Activated CD4-positive, alpha-beta T cell treated with anti-CD3 and anti-CD28 coated beads for 36 hours (primary cell): ENCODE measurements at regions of chr11 and their contacts with region 1.

Region 1: DNA sequence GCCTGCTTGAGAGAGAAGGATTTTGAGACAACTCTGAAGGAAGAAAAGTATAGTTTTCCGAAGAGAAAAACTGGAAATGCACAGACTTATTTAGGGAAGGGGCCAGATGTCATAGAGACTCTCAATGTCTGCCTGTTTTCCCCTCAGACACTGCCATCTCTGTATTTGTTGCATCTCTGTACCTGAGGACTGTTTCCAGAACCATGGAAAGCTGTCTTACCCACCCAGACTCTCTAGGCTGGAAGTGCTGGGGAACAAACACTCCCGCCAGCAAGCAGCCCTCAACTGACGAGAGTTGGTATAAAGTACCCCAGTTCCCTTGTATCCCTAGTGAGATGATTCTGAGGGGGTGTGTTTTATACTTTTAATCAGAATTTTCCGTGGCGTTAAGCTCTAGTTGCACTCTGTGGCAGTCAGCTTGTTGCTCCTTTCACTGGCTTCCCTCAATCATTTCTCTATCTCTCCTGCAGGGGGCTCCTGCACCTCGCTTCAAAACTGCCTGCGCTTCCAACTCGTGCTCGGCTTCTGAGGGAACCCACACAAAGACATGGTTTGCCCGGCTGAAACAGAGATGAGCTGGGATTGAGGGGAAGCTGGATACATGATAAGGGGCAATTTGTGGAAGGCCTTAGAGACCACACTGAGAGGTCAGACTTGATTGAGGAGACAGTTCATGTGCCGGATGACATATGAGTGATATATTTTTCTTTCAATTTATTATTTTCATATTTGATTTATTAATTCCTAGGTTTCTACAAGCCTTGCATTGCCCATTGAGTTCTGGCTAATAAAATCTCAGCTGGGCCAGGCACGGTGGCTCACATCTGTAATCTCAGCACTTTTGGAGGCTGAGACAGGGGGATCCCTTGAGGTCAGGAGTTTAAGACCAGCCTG is 36.9 kb upstream of the CLPB start:
- DNase-seq: peak; percentile 75
- ATAC-seq: peak; percentile 94
- H3K4me3 Mint-ChIP-seq: peak overlapping the region; percentile 7
- H3K27ac Mint-ChIP-seq: no peak overlapping the region
- H3K4me1 Mint-ChIP-seq: peaks cover 3% of the 10 kb centered on the region
- H3K27me3 Mint-ChIP-seq: peaks cover 19% of the 10 kb centered on the region

Region 2: GRCh38 chr11:72209101-72209500 is 262.2 kb before region 1 on chr11:
- CTCF ChIA-PET with region 1: no interaction called
- POLR2A ChIA-PET with region 1: no interaction called
- intact Hi-C with region 1: no loop called
- DNase-seq: no peak
- ATAC-seq: no peak
- H3K4me3 Mint-ChIP-seq: no peak overlapping the region
- H3K27ac Mint-ChIP-seq: no peak overlapping the region
- H3K4me1 Mint-ChIP-seq: no peaks in the 10 kb centered on the region
- H3K27me3 Mint-ChIP-seq: peaks cover 13% of the 10 kb centered on the region

Region 3: DNA sequence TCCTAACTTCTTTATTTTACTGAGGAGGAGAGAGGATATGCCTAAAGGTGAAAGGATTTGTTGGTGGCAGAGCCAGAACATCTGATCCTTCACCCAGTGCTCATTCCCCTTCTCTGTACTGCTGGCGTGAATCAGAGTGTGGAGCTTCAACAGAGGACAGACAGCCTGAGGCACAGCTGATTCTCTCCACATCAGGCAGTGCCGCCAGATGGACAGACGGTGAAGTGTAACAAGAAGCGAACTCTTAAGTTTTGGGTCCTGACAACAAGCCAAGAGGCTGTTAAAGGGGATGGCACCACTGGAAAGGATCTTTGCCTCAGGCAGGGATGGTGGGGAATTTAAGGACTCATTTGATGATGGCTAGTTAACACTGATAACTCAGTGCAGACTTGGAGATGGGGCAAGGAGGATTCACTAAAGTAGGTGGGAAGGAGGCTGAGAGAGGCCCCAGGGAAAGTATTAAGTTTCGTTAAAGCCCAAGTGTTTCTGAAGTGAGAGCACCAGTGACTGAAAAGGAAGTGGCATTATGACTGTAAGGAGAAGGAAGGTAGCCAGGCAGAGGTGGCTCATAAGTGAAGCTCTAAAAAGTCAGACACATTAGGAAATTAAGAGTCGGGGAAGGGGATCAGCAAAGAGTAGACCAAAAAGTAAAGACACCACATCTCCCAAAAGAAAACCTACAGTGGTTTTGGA is 118.2 kb before region 1 on chr11:
- CTCF ChIA-PET with region 1: no interaction called
- POLR2A ChIA-PET with region 1: no interaction called
- intact Hi-C with region 1: no loop called
- DNase-seq: peak; percentile 47
- ATAC-seq: peak; percentile 96
- H3K4me3 Mint-ChIP-seq: no peak overlapping the region
- H3K27ac Mint-ChIP-seq: no peak overlapping the region
- H3K4me1 Mint-ChIP-seq: no peaks in the 10 kb centered on the region
- H3K27me3 Mint-ChIP-seq: no peaks in the 10 kb centered on the region

Region 4: GRCh38 chr11:72413914-72414628 is 57.2 kb before region 1 on chr11:
- CTCF ChIA-PET with region 1: no interaction called
- POLR2A ChIA-PET with region 1: no interaction called
- intact Hi-C with region 1: no loop called
- DNase-seq: peak; percentile 92
- ATAC-seq: peak; percentile 85
- H3K4me3 Mint-ChIP-seq: no peak overlapping the region
- H3K27ac Mint-ChIP-seq: peak overlapping the region; percentile 57
- H3K4me1 Mint-ChIP-seq: peaks cover 29% of the 10 kb centered on the region
- H3K27me3 Mint-ChIP-seq: no peaks in the 10 kb centered on the region

Region 5: DNA sequence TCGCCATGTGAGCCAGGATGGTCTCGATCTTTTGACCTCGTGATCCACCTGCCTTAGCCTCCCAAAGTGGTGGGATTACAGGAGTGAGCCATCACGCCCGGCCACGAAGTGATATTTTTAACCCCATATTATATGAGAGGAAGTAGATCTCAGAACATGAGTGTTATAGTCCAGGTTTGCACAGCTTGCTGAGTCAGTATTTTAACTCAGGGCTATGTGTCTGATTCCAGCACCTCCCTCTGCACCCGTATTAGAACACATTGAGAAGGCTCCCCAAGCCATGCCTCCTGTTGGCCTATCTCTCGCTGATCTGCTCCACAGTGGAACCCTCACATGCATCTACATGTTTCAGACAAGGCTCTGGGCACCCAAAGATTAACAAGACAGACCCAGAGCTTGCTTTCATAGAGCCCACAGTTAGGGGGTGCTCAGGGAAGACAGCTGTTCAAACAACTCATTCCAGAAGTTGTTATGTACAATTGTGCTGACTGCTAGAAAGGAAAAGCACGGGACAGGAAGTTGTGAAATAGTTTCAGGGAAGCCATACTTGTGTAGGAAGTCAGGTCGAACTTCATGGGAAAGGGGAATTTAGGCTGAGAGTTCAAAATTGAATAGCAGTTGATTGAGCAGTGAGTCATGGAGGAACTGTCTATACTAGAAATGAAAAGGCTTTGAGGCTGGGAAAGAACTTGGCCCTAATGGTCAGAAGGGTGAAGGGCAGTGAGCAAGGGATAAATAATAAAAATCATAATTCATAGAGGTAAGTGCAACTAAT is 12.3 kb after region 1 on chr11:
- CTCF ChIA-PET with region 1: interaction called, 13 read pairs
- POLR2A ChIA-PET with region 1: no interaction called
- intact Hi-C with region 1: no loop called
- DNase-seq: no peak
- ATAC-seq: peak; percentile 42
- H3K4me3 Mint-ChIP-seq: no peak overlapping the region
- H3K27ac Mint-ChIP-seq: no peak overlapping the region
- H3K4me1 Mint-ChIP-seq: peaks cover 5% of the 10 kb centered on the region
- H3K27me3 Mint-ChIP-seq: peaks cover 2% of the 10 kb centered on the region

Region 6: DNA sequence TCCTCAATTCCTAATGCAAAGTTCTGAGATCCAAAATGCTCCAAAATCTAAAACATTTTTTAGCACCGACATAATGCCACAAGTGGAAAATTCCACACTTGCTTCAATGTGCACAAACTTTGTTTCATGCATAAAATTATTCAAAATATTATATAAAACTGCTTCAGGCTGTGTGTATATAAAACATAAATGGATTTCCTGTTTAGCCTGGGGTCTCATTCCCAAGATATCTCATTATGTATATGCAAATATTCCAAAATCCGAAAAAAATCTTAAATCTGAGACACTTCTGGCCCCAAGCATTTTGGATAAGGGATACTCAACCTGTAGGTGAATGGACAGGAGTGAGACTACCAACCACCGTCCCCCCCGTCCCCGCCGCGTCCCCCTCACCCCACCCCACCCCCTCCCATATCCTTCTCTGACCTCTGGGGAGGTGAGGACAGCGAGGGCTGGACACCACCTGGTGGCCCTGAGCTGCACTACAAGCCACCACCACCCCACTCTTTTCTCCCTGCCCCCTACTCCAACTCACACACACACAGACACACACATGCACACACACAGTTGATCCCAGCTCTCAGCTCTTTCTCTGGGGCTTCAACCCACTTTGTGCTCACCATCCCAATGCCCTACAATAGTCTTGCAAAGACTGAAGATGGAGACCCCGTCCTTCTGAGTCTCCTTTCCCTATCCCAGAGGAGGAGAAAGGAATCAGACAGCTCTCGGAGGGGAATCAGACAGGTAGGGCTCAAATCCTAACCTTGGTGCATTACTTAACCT is 102.0 kb after region 1 on chr11:
- CTCF ChIA-PET with region 1: interaction called, 21 read pairs
- POLR2A ChIA-PET with region 1: no interaction called
- intact Hi-C with region 1: loop called (anchors 1 kb)
- DNase-seq: peak; percentile 56
- ATAC-seq: peak; percentile 70
- H3K4me3 Mint-ChIP-seq: no peak overlapping the region
- H3K27ac Mint-ChIP-seq: no peak overlapping the region
- H3K4me1 Mint-ChIP-seq: peaks cover 4% of the 10 kb centered on the region
- H3K27me3 Mint-ChIP-seq: peaks cover 12% of the 10 kb centered on the region

Region 7: DNA sequence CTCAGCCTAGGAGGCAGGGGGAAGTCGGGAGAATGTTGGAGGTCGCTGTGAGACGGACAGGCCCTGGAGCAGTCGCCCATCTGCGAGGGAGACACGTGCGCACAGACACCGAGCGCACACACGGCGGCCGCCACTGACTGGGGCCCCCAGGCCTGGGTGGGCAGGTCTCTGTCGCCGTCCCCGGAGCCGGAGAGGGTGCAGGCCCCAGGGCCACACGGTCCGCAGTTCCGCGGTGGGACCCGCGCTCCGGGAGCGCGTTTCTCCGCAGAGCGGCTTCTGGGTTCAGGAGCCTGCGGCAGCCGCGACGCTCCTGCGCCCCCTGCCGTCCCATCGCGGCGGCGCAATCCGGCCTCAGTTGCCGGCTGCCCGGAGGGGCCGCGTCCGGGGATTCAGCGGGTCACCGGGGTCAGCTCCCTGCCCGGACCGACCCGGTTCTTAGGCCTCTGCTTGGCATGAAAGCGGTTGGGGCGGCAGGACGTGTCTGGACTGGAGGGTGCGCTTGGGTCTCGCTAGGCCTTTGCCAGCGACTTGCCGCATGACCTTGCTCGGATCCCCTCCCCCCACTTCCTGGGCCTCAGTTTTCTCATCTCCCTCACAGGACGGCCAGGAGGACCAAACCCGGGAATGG is 171.7 kb after region 1 on chr11:
- CTCF ChIA-PET with region 1: interaction called, 10 read pairs
- POLR2A ChIA-PET with region 1: no interaction called
- intact Hi-C with region 1: loop called in 1 of 2 experiments (anchors 1 kb)
- DNase-seq: peak; percentile 79
- ATAC-seq: peak; percentile 88
- H3K4me3 Mint-ChIP-seq: no peak overlapping the region
- H3K27ac Mint-ChIP-seq: no peak overlapping the region
- H3K4me1 Mint-ChIP-seq: no peaks in the 10 kb centered on the region
- H3K27me3 Mint-ChIP-seq: peaks cover 4% of the 10 kb centered on the region

Region 8: DNA sequence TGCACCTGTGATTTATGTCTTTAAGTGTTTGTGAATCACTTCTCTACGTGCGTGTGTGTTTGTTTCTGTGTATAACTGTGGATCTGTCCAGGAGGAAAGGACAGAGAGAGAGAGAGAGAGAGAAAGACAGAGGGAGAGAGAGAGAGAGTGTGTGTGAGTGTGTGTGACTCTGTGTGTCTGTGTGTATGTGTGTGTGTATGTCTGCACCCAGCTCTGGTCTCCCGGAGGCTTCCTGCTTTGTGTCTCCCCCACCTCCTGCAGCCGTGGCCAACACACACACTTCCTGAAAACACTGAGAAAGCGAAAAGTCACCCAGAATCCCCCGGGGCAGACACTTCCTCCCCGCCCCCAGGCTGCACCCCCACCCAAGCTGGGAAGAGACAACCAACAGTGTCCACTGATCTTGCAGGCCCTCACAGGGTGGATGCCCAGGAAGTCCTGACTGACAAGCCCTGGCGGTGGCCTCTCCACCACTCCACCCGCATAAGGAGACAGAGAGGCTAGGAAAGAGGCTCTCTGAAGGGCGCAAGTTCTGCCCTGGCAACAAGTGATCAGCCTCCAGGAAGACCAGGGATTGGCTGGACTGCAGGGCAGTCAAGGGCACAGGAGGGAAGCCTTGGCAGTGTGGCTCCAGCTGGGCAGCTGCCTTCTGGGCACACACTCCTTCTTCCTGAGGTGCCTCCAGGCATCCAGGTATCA is 250.9 kb after region 1 on chr11:
- CTCF ChIA-PET with region 1: no interaction called
- POLR2A ChIA-PET with region 1: no interaction called
- intact Hi-C with region 1: no loop called
- DNase-seq: peak; percentile 89
- ATAC-seq: peak; percentile 91
- H3K4me3 Mint-ChIP-seq: peak overlapping the region; percentile 92
- H3K27ac Mint-ChIP-seq: peak overlapping the region; percentile 96
- H3K4me1 Mint-ChIP-seq: peaks cover 48% of the 10 kb centered on the region
- H3K27me3 Mint-ChIP-seq: no peaks in the 10 kb centered on the region

Region 9: GRCh38 chr11:73177778-73178577 is 706.7 kb after region 1 on chr11:
- CTCF ChIA-PET with region 1: no interaction called
- POLR2A ChIA-PET with region 1: no interaction called
- intact Hi-C with region 1: loop called in 1 of 2 experiments (anchors 10 kb)
- DNase-seq: peak; percentile 89
- ATAC-seq: peak; percentile 100
- H3K4me3 Mint-ChIP-seq: no peak overlapping the region
- H3K27ac Mint-ChIP-seq: no peak overlapping the region
- H3K4me1 Mint-ChIP-seq: no peaks in the 10 kb centered on the region
- H3K27me3 Mint-ChIP-seq: no peaks in the 10 kb centered on the region